ENCODE measurements at regions of chr6 and their contacts with region 1.

Region 1: DNA sequence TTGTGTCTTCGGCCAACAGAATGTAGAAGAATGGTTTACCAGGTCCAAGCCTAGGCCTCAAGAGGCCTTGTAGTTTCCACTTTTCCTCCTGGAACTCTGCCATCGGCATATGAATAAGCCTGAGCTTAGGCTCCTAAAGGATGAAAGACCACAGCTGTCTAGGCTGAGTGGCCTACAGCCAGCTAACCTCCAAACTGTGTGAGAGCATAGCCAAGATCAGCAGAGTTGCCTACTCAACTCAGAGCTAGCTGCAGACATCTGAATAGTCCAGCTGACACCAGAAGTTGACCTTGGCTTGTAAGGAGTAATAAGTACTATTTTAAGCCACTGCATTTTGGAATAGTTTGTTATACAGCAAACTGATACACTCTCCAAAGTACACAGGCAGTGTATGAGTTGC is 52.6 kb upstream of the SMIM29 start:
- DNase-seq: peak; percentile 52 to 73
- ATAC-seq: peak; percentile 89 to 94 (median 92)
- H3K4me3 ChIP-seq: no peak overlapping the region
- H3K27ac ChIP-seq: peak overlapping the region; percentile 87
- H3K4me1 ChIP-seq: peaks cover 53% of the 10 kb centered on the region
- H3K27me3 ChIP-seq: no peaks in the 10 kb centered on the region
- CTCF ChIP-seq: no peak

Region 2: DNA sequence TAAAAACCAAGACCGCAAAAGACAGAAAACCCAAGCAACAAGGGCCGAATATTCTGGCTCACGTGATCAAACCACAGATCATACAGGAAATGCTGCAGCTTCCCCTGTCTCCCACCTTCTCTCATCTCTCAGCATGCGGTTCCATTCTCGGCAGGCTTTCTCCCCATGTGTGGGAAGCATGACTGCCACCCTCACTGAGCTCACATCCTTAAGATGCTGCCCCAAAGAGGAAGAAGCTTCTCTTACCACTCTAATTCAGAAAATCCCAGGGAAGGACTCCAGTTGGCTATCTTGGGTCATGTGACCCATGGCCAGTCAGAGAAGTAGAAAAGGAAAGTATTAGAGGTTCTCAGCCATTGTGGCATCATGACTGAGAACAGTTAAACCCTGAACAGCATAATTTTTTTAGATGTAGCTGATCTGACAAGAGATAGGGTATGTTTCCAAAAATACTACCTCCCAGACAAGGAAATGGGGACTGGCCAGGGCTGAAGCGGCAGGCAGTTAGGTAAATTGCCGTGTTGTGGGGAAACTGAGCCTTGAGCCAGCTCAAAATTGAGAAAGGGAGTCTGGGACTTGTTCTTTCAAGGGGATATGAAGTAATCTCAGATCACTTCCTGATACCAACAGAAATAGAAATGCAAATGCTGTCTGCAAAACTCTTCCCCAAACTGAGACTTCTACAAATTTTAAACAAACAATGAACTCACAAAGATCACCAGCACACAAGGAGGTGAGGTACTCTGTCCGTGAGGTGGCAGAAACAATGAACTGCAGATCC is 118.5 kb before region 1 on chr6:
- intact Hi-C with region 1: no loop called
- DNase-seq: no peak
- ATAC-seq: peak in 1 of 4 donors; percentile 19
- H3K4me3 ChIP-seq: no peak overlapping the region
- H3K27ac ChIP-seq: no peak overlapping the region
- H3K4me1 ChIP-seq: no peaks in the 10 kb centered on the region
- H3K27me3 ChIP-seq: peaks cover 0 to 5% (median 2%) of the 10 kb centered on the region in 3 donors
- CTCF ChIP-seq: no peak

Region 3: GRCh38 chr6:34338811-34339210 is 37.4 kb after region 1 on chr6:
- intact Hi-C with region 1: loop called in 1 of 2 experiments (anchors 5 kb)
- DNase-seq: no peak
- ATAC-seq: no peak
- H3K4me3 ChIP-seq: no peak overlapping the region
- H3K27ac ChIP-seq: peak overlapping the region; percentile 79
- H3K4me1 ChIP-seq: peaks cover 72% of the 10 kb centered on the region
- H3K27me3 ChIP-seq: no peaks in the 10 kb centered on the region
- CTCF ChIP-seq: no peak

Measured in psoas muscle (tissue), 8 donors.